Caco-2 (cell line): ENCODE measurements at regions of chr5 and their contacts with region 1.

Region 1: GRCh38 chr5:90421136-90421535 is 11.6 kb upstream of the CETN3 start:
- DNase-seq: peak; percentile 50 to 55
- H3K4me3 ChIP-seq: no peak overlapping the region
- H3K4me3 Mint-ChIP-seq: no peak overlapping the region
- H3K27ac Mint-ChIP-seq: no peak overlapping the region
- H3K4me1 ChIP-seq: peaks cover 4% of the 10 kb centered on the region; the same call in 1 of the 2 replicates
- H3K4me1 Mint-ChIP-seq: no peaks in the 10 kb centered on the region
- H3K27me3 ChIP-seq: no peaks in the 10 kb centered on the region
- H3K27me3 Mint-ChIP-seq: peaks cover 9% of the 10 kb centered on the region
- CTCF ChIP-seq: peak; percentile 30 to 68

Region 2: DNA sequence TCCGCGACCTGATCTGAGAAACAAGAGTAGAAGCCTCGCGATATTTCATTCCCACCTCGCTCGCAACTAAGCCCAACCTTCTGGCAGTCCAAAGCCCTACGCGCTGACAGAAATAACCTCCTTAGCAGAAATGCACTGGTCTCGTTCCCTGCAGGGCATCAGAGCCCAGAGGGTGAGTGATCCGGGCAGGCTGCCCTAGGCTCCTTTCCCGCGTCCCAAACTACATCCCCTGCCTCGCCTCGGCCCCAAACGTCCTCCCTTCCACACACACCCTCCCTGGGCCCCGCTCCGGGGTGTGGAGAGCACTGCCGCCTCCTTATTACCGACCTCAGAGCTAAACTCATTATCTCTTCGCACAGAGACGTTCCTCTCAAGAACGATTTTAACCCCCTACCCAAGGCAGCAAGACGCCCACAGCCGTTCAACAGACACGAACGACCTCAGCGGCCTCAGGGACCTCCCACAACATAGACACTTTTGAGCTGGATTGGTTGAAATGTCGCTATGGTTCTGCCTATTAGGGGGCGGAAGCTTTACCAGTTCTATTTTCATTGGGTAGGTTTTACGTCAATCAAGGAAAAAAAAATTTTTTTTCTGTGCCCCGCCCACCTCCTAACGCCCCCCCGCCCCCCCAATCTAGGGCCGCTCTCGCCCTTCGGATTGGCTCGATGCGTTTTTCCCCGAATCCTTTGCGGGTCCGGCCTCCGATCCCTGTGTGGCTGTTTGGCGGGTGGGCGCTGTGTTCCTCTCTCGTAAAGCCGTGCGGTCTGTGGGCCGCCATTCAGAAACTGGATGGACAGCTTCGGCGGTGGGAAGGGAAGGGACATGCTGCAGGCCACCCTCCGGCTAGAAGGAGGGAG is 11.6 kb before region 1 on chr5 and contains the start of gene CETN3:
- CTCF ChIA-PET with region 1: interaction called, 7 read pairs
- POLR2A ChIA-PET with region 1: interaction called, 9 read pairs
- intact Hi-C with region 1: loop called (anchors 1 kb)
- DNase-seq: peak; percentile 96 to 97
- H3K4me3 ChIP-seq: peak within 1 kb of the TSS; percentile 82
- H3K4me3 Mint-ChIP-seq: no peak within 1 kb of the TSS
- H3K27ac Mint-ChIP-seq: no peak within 1 kb of the TSS
- H3K4me1 ChIP-seq: peaks cover 9% of the 10 kb centered on the region; the same call in 1 of the 2 replicates
- H3K4me1 Mint-ChIP-seq: peaks cover 14% of the 10 kb centered on the region
- H3K27me3 ChIP-seq: no peaks in the 10 kb centered on the region
- H3K27me3 Mint-ChIP-seq: no peaks in the 10 kb centered on the region
- CTCF ChIP-seq: peak in 1 of 2 experiments; percentile 22
- total RNA-seq, gene CETN3: 38.5 and 42.7 TPM in 2 replicates

Region 3: DNA sequence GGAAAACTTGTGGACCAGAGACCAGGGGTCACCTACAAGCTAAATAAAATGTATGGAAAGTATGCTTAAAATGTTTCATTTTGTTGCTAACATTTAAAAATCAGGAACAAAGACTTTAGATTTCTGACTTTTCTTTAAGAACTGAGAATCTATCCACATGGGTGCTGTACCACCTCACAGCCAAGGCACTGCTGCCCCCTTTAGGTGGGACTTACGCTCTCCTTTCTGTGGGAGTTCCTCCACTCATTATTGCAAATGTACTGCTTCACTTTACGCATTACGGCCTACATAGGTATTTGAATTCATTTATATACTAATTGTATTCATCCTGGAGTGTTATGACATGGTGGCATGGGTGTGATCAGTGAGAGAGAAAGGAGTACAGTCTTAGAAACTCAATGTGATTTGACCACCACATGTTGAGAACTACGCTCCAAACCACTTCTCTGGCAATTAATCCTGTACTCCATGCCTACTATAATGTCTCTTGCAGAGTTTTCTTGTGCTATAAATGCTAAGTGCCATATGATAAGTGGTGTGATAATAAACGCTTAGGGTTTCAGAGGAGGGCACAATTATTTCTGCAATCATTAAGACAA is 13.1 kb after region 1 on chr5:
- CTCF ChIA-PET with region 1: interaction called, 5 read pairs
- POLR2A ChIA-PET with region 1: no interaction called
- intact Hi-C with region 1: loop called (anchors 1 kb)
- DNase-seq: peak; percentile 55 to 77
- H3K4me3 ChIP-seq: no peak overlapping the region
- H3K4me3 Mint-ChIP-seq: no peak overlapping the region
- H3K27ac Mint-ChIP-seq: no peak overlapping the region
- H3K4me1 ChIP-seq: peaks cover 5% of the 10 kb centered on the region; the same call in 1 of the 2 replicates
- H3K4me1 Mint-ChIP-seq: peaks cover 6% of the 10 kb centered on the region
- H3K27me3 ChIP-seq: no peaks in the 10 kb centered on the region
- H3K27me3 Mint-ChIP-seq: peaks cover 10% of the 10 kb centered on the region
- CTCF ChIP-seq: peak; percentile 73 to 86

Region 4: GRCh38 chr5:90606539-90606938 is 185.4 kb after region 1 on chr5:
- CTCF ChIA-PET with region 1: interaction called, 4 read pairs
- POLR2A ChIA-PET with region 1: no interaction called
- intact Hi-C with region 1: loop called (anchors 1 kb)
- DNase-seq: peak in 1 of 2 experiments; percentile 5
- H3K4me3 ChIP-seq: no peak overlapping the region
- H3K4me3 Mint-ChIP-seq: no peak overlapping the region
- H3K27ac Mint-ChIP-seq: no peak overlapping the region
- H3K4me1 ChIP-seq: no peaks in the 10 kb centered on the region
- H3K4me1 Mint-ChIP-seq: peaks cover 6% of the 10 kb centered on the region
- H3K27me3 ChIP-seq: no peaks in the 10 kb centered on the region; the same call in 1 of the 2 replicates
- H3K27me3 Mint-ChIP-seq: peaks cover 9% of the 10 kb centered on the region
- CTCF ChIP-seq: peak; percentile 37 to 52